ENCODE measurements at regions of chrX and their contacts with region 1.

Region 1: GRCh38 chrX:40792433-40792832 is 57.1 kb upstream of the MED14 start:
- DNase-seq: no peak
- H3K4me3 ChIP-seq: no peak overlapping the region
- H3K27ac ChIP-seq: no peak overlapping the region
- H3K4me1 ChIP-seq: peaks cover 0 to 5% of the 10 kb centered on the region in 2 experiments; a peak in 1 of 4 replicates
- H3K27me3 ChIP-seq: peaks cover 26% of the 10 kb centered on the region; the same call in 1 of the 2 replicates
- CTCF ChIP-seq: no peak
- EP300 ChIP-seq: no peak
- RAD21 ChIP-seq: no peak

Region 2: GRCh38 chrX:40651620-40652223 is 140.7 kb before region 1 on chrX:
- CTCF ChIA-PET with region 1: interaction called, 56 read pairs
- POLR2A ChIA-PET with region 1: interaction called, 3 read pairs
- DNase-seq: peak; percentile 48
- H3K4me3 ChIP-seq: no peak overlapping the region
- H3K27ac ChIP-seq: no peak overlapping the region
- H3K4me1 ChIP-seq: peaks cover 3 to 4% of the 10 kb centered on the region in 2 experiments; a peak in 2 of 4 replicates
- H3K27me3 ChIP-seq: no peaks in the 10 kb centered on the region
- CTCF ChIP-seq: peak; percentile 90
- EP300 ChIP-seq: no peak
- RAD21 ChIP-seq: peak; percentile 92

Region 3: GRCh38 chrX:40663880-40664633 is 128.4 kb before region 1 on chrX:
- CTCF ChIA-PET with region 1: interaction called, 13 read pairs
- POLR2A ChIA-PET with region 1: no interaction called
- DNase-seq: peak; percentile 26
- H3K4me3 ChIP-seq: no peak overlapping the region
- H3K27ac ChIP-seq: no peak overlapping the region
- H3K4me1 ChIP-seq: no peaks in the 10 kb centered on the region
- H3K27me3 ChIP-seq: no peaks in the 10 kb centered on the region
- CTCF ChIP-seq: peak; percentile 48
- EP300 ChIP-seq: no peak
- RAD21 ChIP-seq: 0 out of 2 replicates have a peak, but pooled peaks have one; percentile 23

Region 4: GRCh38 chrX:40809210-40809609 is 16.8 kb after region 1 on chrX:
- CTCF ChIA-PET with region 1: interaction called, 15 read pairs
- POLR2A ChIA-PET with region 1: no interaction called
- DNase-seq: no peak
- H3K4me3 ChIP-seq: no peak overlapping the region
- H3K27ac ChIP-seq: no peak overlapping the region
- H3K4me1 ChIP-seq: no peaks in the 10 kb centered on the region
- H3K27me3 ChIP-seq: no peaks in the 10 kb centered on the region; the same call in 1 of the 2 replicates
- CTCF ChIP-seq: no peak
- EP300 ChIP-seq: no peak
- RAD21 ChIP-seq: no peak

Region 5: DNA sequence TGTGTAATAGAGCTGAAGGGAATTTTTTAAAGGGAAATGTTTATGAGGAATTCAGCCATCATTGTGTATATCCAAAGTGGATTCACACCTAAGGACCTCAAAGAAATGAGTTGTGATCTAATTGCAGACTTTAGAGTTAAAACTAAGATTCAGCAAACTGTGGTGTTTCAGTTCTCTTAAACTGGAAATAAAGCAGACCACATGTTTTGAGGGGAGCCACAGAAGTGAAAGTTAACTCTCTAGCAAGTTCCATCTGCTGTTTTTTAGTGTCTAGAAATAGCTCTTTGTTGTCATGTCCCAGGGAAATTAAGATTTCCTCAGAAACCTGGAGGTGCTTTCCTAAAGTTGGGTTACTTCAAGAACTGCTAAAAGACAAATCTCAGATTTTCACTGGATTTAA is 444.2 kb after region 1 on chrX:
- CTCF ChIA-PET with region 1: no interaction called
- POLR2A ChIA-PET with region 1: no interaction called
- DNase-seq: no peak
- H3K4me3 ChIP-seq: no peak overlapping the region
- H3K27ac ChIP-seq: no peak overlapping the region
- H3K4me1 ChIP-seq: peaks cover 0 to 5% of the 10 kb centered on the region in 2 experiments; a peak in 1 of 4 replicates
- H3K27me3 ChIP-seq: no peaks in the 10 kb centered on the region
- CTCF ChIP-seq: no peak
- EP300 ChIP-seq: no peak
- RAD21 ChIP-seq: no peak

Measured in SK-N-SH (cell line).